Heart left ventricle (tissue), 16 donors: ENCODE measurements at regions of chr12 and their contacts with region 1.

Region 1: DNA sequence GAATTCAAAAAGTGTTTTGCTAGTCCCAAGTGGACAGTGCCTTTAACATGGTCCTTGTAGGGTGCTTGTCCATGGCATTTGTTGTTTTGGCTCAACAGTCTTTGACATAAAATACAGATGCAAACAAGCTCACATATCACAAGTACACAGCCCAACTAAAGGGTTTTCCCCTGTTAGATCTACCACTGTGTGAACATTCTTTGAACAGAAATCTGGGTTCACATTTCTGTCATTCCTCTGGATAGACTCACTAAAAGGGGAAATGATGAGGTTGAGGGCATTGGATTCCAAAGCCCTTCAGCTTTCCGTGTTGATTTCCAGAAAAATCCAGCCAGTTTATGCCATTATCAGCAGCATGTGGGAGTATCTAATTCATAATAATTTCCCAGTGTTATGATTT is 54.1 kb downstream of the EP400 start:
- DNase-seq: no peak
- ATAC-seq: no peak
- H3K4me3 ChIP-seq: no peak overlapping the region
- H3K27ac ChIP-seq: no peak overlapping the region
- H3K4me1 ChIP-seq: peaks cover 0 to 3% (median 0%) of the 10 kb centered on the region in 12 donors
- H3K27me3 ChIP-seq: no peaks in the 10 kb centered on the region
- CTCF ChIP-seq: no peak
- POLR2A ChIP-seq: no peak

Region 2: GRCh38 chr12:131104463-131105350 is 899.1 kb before region 1 on chr12:
- intact Hi-C with region 1: loop called in 2 of 10 experiments (anchors 10 kb)
- DNase-seq: peak; percentile 82 to 92 (median 87)
- ATAC-seq: peak; percentile 74 to 94 (median 85)
- H3K4me3 ChIP-seq: no peak overlapping the region
- H3K27ac ChIP-seq: peak overlapping the region in 4 of 12 donors; percentile 6 to 34 (median 10)
- H3K4me1 ChIP-seq: peaks cover 0 to 16% (median 8%) of the 10 kb centered on the region in 12 donors
- H3K27me3 ChIP-seq: no peaks in the 10 kb centered on the region
- CTCF ChIP-seq: peak; percentile 86 to 96 (median 92)
- POLR2A ChIP-seq: no peak

Region 3: DNA sequence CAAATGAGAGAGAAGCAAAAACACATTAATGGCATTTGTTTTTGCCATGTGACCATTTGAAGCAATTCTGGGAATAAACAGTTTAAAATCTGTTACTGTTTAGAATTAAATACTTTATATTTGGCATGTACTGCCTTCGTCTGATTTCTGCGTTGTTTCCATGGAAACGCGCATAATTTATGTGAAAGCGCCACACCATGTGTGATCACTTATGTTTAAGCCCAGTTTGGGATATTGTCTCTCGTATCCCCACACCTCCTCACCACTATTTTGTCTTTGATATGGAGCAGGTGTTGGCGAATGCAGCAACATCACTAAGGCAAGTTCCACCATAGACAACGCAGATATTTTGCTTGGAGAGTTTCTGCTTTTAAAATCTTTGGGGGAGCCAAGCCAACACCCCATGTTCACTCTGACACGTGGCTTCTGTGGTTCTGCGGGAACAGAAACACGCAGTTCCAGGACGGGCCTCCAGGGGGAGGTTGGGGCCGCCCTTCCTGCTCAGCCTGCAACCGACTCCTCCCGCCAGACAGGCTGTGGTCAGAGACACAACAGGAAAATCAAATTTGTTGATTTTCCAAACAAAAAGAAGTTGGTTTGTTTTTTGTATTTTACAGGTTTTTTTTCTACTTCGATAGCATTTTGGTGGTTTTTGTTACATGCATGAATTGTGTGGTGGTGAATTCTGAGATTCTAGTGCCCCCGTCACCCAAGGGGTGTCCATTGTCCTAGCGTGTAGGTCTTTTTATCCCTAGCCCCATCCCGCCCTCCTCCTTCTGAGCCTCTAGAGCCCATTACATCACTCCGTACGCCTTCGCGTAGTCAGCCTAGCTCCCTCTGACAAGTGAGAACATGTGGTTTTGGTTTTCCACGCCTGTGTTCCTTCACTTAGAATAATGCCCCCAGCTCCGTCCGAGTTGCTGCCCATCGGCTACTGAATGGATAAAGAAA is 394.8 kb before region 1 on chr12:
- intact Hi-C with region 1: loop called in 4 of 10 experiments (anchors 2 to 5 kb)
- DNase-seq: peak; percentile 67 to 84 (median 71)
- ATAC-seq: peak; percentile 71 to 95 (median 84)
- H3K4me3 ChIP-seq: peak overlapping the region in 3 of 12 donors; percentile 2 to 32 (median 17)
- H3K27ac ChIP-seq: no peak overlapping the region
- H3K4me1 ChIP-seq: peaks cover 0 to 40% (median 0%) of the 10 kb centered on the region in 12 donors
- H3K27me3 ChIP-seq: peaks cover 0 to 6% (median 0%) of the 10 kb centered on the region in 9 donors
- CTCF ChIP-seq: peak; percentile 69 to 94 (median 83)
- POLR2A ChIP-seq: no peak

Region 4: DNA sequence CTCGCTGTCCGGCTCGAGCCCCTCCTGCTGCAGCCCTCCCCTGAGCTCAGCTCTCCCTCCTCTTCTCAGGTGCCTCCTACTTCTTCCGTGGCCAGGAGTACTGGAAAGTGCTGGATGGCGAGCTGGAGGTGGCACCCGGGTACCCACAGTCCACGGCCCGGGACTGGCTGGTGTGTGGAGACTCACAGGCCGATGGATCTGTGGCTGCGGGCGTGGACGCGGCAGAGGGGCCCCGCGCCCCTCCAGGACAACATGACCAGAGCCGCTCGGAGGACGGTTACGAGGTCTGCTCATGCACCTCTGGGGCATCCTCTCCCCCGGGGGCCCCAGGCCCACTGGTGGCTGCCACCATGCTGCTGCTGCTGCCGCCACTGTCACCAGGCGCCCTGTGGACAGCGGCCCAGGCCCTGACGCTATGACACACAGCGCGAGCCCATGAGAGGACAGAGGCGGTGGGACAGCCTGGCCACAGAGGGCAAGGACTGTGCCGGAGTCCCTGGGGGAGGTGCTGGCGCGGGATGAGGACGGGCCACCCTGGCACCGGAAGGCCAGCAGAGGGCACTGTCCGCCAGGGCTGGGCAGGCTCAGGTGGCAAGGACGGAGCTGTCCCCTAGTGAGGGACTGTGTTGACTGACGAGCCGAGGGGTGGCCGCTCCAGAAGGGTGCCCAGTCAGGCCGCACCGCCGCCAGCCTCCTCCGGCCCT is 152.8 kb before region 1 on chr12:
- intact Hi-C with region 1: loop called in 3 of 10 experiments (anchors 5 to 10 kb)
- DNase-seq: peak in 3 of 5 donors; percentile 18 to 60 (median 49)
- ATAC-seq: peak in 2 of 4 donors; percentile 85 to 86
- H3K4me3 ChIP-seq: no peak overlapping the region
- H3K27ac ChIP-seq: no peak overlapping the region
- H3K4me1 ChIP-seq: peaks cover 0 to 7% (median 0%) of the 10 kb centered on the region in 12 donors
- H3K27me3 ChIP-seq: peaks cover 0 to 24% (median 6%) of the 10 kb centered on the region in 9 donors
- CTCF ChIP-seq: peak in 6 of 12 donors; percentile 43 to 83 (median 70)
- POLR2A ChIP-seq: no peak

Region 5: DNA sequence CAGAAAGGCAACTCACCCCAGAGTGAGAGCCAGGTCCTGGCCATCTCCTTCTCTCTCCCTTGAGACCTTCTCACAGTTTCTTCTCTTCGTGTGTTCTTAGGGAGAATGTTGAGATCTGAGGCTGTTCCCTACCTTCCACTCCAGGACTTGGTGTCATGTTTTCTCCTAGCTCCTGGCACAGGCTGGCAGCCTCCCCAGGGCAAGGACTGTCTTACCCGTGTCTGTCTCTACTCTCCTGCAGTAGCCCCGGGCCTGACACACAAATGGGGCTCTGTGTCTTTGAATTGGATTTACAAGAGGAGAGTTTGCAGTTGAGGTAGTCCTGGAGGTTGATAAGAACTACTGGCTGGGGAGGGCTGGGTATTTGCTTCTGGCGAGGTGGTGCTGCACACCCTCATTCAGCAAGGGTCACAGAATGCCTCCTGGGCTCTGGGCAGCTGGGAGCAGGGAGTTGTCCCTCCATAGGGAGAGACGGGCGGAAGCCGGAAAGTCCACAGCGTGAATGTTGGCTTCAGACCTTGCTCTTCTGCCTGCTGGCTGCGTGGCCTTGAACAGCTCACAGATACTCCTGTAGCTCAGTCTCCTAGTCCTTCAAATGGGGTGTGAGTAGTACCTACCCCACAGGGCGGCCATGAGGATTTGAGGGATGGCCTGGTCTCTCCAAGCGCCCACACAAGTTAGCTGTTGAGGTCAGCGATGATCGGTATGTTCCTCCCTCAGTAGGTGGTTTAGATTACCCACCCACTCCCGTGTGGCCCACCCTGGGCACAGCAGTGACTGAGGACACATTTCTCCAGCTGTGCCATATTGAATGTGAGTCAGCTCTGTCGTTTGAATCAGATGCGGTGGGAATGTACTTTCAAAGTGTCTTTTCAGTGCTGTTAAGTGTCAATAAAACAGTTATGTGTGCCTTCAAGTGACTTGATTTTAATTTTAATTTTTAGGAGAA is 43.9 kb before region 1 on chr12:
- intact Hi-C with region 1: loop called in 1 of 10 experiments (anchors 5 kb)
- DNase-seq: no peak
- ATAC-seq: peak in 3 of 4 donors; percentile 21 to 42 (median 39)
- H3K4me3 ChIP-seq: no peak overlapping the region
- H3K27ac ChIP-seq: no peak overlapping the region
- H3K4me1 ChIP-seq: peaks cover 0 to 48% (median 34%) of the 10 kb centered on the region in 12 donors
- H3K27me3 ChIP-seq: no peaks in the 10 kb centered on the region
- CTCF ChIP-seq: no peak
- POLR2A ChIP-seq: no peak